ENCODE measurements at regions of chr9 and their contacts with region 1.

Region 1: DNA sequence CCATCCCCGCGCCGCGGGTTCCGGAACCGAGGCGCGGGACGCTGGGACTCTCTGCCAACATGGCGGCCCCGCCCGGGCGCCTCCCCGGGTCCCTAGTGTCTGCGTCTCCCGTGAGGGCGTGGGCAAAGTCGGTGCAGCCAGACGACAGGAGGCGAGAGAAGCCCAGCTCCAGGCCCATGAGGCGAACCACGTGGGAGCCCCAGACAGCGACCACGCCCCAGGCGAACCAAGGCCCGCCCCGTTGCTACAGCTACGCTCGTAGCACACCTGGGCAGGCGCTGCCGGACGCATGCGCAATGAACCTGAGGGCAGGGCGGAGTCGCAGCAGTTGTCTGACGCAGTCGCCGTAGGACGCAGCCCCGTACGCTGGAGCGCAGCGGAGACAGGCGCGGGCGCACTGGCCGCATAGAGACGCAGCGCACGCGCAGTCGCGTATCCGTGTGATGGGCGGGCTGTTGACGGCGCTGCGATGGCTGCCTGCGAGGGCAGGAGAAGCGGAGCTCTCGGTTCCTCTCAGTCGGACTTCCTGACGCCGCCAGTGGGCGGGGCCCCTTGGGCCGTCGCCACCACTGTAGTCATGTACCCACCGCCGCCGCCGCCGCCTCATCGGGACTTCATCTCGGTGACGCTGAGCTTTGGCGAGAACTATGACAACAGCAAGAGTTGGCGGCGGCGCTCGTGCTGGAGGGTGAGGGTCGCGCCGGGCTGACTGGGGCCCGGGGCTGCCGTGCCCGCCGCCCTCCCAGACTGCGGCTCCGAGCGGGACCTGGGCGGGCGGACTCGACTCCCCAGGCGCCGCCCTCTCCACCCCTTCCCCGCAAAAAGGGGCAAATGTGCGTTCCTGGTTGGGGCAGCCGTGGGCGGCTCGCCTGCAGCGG is at the start of gene MAN1B1:
- DNase-seq: peak; percentile 99
- H3K4me3 Mint-ChIP-seq: peak within 1 kb of the TSS; percentile 90
- H3K27ac Mint-ChIP-seq: peak within 1 kb of the TSS; percentile 89
- H3K4me1 Mint-ChIP-seq: peaks cover 40% of the 10 kb centered on the region
- H3K27me3 Mint-ChIP-seq: no peaks in the 10 kb centered on the region
- CTCF ChIP-seq: no peak
- total RNA-seq, gene MAN1B1: 46.5 and 49.1 TPM in 2 replicates

Region 2: GRCh38 chr9:136742591-136743391 is 344.0 kb before region 1 on chr9 and contains the start of gene LCN10:
- CTCF ChIA-PET with region 1: no interaction called
- POLR2A ChIA-PET with region 1: no interaction called
- intact Hi-C with region 1: no loop called
- DNase-seq: no peak
- H3K4me3 Mint-ChIP-seq: no peak within 1 kb of the TSS
- H3K27ac Mint-ChIP-seq: no peak within 1 kb of the TSS
- H3K4me1 Mint-ChIP-seq: no peaks in the 10 kb centered on the region
- H3K27me3 Mint-ChIP-seq: peaks cover 37% of the 10 kb centered on the region
- CTCF ChIP-seq: peak; percentile 41
- total RNA-seq, gene LCN10: not detected in 2 replicates

Region 3: DNA sequence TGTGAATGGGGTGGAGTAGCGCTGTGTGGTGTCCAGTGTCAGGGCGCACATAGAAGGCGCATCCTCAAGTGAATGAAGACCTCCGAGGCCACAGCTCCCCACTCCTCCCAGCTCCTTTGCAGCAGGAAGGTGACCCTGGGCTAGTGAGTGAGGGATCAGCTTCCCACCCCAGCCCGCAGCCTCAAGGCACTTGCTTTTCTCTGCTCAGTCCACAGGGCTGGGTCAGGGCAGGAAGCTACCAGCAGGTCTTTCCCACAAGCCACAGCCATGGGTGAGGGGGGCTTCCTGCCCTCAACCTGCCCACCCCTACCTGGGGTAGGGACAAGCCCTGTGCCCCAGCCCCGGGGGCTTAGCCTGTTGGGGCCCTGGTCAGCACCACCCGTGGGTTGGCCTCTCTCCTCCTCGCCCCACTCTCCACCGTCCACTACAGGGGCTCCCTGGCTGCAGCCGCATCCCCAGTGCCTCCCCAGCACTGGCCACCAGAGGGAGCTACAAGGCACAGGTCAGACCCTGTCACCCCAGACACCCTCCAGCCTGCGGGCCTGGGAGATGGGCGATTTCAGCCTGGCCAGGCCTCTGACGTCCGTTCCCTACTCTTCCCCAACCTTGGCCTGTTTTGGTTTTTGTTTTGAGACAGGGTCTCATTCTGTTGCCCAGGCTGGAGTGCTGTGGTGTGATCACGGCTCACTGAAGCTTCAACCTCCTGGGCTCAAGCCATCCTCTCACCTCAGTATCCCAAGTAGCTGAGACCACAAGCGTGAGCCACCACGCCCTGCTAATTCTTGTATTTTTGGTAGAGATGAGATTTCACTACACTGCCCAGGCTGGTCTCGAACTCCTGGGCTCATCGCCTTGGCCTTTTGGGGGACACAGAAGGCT is 57.5 kb before region 1 on chr9:
- CTCF ChIA-PET with region 1: interaction called, 13 read pairs
- POLR2A ChIA-PET with region 1: no interaction called
- intact Hi-C with region 1: no loop called
- DNase-seq: peak; percentile 70
- H3K4me3 Mint-ChIP-seq: peak overlapping the region; percentile 67
- H3K27ac Mint-ChIP-seq: no peak overlapping the region
- H3K4me1 Mint-ChIP-seq: peaks cover 8% of the 10 kb centered on the region
- H3K27me3 Mint-ChIP-seq: no peaks in the 10 kb centered on the region
- CTCF ChIP-seq: peak; percentile 85

Region 4: GRCh38 chr9:137064027-137064879 is 22.5 kb before region 1 on chr9:
- CTCF ChIA-PET with region 1: interaction called, 23 read pairs
- POLR2A ChIA-PET with region 1: interaction called, 22 read pairs
- intact Hi-C with region 1: no loop called
- DNase-seq: peak; percentile 68
- H3K4me3 Mint-ChIP-seq: no peak overlapping the region
- H3K27ac Mint-ChIP-seq: no peak overlapping the region
- H3K4me1 Mint-ChIP-seq: peaks cover 17% of the 10 kb centered on the region
- H3K27me3 Mint-ChIP-seq: no peaks in the 10 kb centered on the region
- CTCF ChIP-seq: peak; percentile 96

Region 5: GRCh38 chr9:137114610-137115391 is 28.0 kb after region 1 on chr9 and contains the start of gene DPP7:
- CTCF ChIA-PET with region 1: interaction called, 4 read pairs
- POLR2A ChIA-PET with region 1: interaction called, 12 read pairs
- intact Hi-C with region 1: no loop called
- DNase-seq: peak; percentile 53
- H3K4me3 Mint-ChIP-seq: peak within 1 kb of the TSS; percentile 62
- H3K27ac Mint-ChIP-seq: no peak within 1 kb of the TSS
- H3K4me1 Mint-ChIP-seq: no peaks in the 10 kb centered on the region
- H3K27me3 Mint-ChIP-seq: no peaks in the 10 kb centered on the region
- CTCF ChIP-seq: no peak
- total RNA-seq, gene DPP7: 139 and 157 TPM in 2 replicates

Region 6: GRCh38 chr9:137200311-137201204 is 113.8 kb after region 1 on chr9 and contains the start of gene TPRN:
- CTCF ChIA-PET with region 1: no interaction called
- POLR2A ChIA-PET with region 1: interaction called, 12 read pairs
- intact Hi-C with region 1: no loop called
- DNase-seq: peak; percentile 100
- H3K4me3 Mint-ChIP-seq: peak within 1 kb of the TSS; percentile 76
- H3K27ac Mint-ChIP-seq: no peak within 1 kb of the TSS
- H3K4me1 Mint-ChIP-seq: peaks cover 12% of the 10 kb centered on the region
- H3K27me3 Mint-ChIP-seq: no peaks in the 10 kb centered on the region
- CTCF ChIP-seq: no peak
- total RNA-seq, gene TPRN: 12.6 and 13.4 TPM in 2 replicates

Region 7: DNA sequence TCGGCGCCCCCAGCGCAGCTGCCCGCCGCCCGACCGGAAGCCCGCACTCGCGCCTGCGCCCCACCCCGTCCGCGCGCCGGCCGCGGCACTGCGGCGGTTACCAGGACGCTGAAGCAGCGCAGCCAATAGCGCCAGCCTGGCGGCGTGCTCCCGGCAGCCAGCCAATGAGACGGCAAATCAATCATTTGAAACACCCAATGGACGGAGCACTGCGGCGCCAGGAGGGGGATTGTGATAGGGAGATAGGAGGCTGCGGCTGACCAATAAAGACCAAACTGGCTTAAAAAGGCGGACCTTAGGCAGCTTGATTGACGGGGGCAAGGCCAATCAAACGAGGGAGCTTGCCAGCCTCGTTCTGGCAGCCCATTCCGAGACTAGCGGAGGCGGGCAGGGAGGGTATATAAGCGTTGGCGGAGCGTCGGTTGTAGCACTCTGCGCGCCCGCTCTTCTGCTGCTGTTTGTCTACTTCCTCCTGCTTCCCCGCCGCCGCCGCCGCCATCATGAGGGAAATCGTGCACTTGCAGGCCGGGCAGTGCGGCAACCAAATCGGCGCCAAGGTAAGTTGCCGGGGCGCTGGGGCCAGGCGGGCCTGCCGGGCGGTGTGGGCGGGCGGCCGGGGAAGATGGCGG is 154.2 kb after region 1 on chr9 and contains the start of gene TUBB4B:
- CTCF ChIA-PET with region 1: interaction called, 4 read pairs
- POLR2A ChIA-PET with region 1: interaction called, 15 read pairs
- intact Hi-C with region 1: no loop called
- DNase-seq: peak; percentile 100
- H3K4me3 Mint-ChIP-seq: peak within 1 kb of the TSS; percentile 80
- H3K27ac Mint-ChIP-seq: peak within 1 kb of the TSS; percentile 94
- H3K4me1 Mint-ChIP-seq: peaks cover 15% of the 10 kb centered on the region
- H3K27me3 Mint-ChIP-seq: no peaks in the 10 kb centered on the region
- CTCF ChIP-seq: no peak
- total RNA-seq, gene TUBB4B: 171 and 180 TPM in 2 replicates